K562 (cell line): ENCODE measurements at regions of chr6 and their contacts with region 1.

Region 1: GRCh38 chr6:118876204-118876603 is 17.7 kb upstream of the ASF1A start:
- DNase-seq: no peak
- ATAC-seq: no peak
- H3K4me3 ChIP-seq: no peak overlapping the region
- H3K27ac ChIP-seq: no peak overlapping the region
- H3K4me1 ChIP-seq: 0 out of 5 replicates have a peak, but pooled peaks cover 0 to under 1% of the 10 kb centered on the region in 2 experiments
- H3K27me3 ChIP-seq: no peaks in the 10 kb centered on the region
- CTCF ChIP-seq: no peak
- EP300 ChIP-seq: no peak
- POLR2A ChIP-seq: no peak
- RAD21 ChIP-seq: no peak

Region 2: GRCh38 chr6:118864341-118865099 is 11.7 kb before region 1 on chr6:
- CTCF ChIA-PET with region 1: no interaction called
- POLR2A ChIA-PET with region 1: interaction called, 13 read pairs
- in situ Hi-C with region 1: no loop called
- intact Hi-C with region 1: no loop called
- DNase-seq: no peak
- ATAC-seq: peak; percentile 53
- H3K4me3 ChIP-seq: no peak overlapping the region
- H3K27ac ChIP-seq: peak overlapping the region; percentile 32; the same call in 1 of the 3 replicates
- H3K4me1 ChIP-seq: peaks cover 0 to 4% of the 10 kb centered on the region in 2 experiments; a peak in 2 of 5 replicates
- H3K27me3 ChIP-seq: no peaks in the 10 kb centered on the region
- CTCF ChIP-seq: no peak
- EP300 ChIP-seq: no peak
- POLR2A ChIP-seq: no peak
- RAD21 ChIP-seq: no peak